Transverse colon (tissue), 4 donors: ENCODE measurements at regions of chr19 and their contacts with region 1.

Region 1: DNA sequence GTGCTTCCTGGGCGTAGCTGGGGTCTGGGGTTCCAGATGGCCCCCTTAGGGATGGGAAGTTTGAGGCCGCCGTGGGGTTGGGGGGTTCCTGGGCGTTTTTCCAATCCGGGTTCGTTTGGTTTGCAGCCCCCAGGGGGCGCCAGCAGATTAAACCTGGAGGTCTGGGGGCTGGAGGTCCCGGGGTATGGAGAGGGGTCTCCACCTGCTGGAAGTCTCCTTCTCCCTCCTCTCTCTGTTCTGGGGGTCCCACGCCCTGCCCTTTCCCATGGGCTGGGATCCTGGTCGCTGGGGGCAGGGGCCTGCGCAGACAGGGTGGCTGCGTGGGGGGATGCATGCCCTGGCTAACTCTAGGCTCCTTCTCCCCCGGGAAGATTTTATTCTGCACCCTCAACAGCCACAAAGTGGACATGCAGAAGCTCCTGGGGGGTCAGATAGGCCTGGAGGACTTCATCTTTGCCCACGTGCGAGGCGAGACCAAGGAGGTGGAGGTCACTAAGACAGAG is 897 bp downstream of the GIPC3 start:
- DNase-seq: no peak
- H3K4me3 ChIP-seq: peak overlapping the region in 3 of 4 donors; percentile 16 to 42 (median 24)
- H3K27ac ChIP-seq: no peak overlapping the region
- H3K4me1 ChIP-seq: peaks cover 3 to 17% (median 8%) of the 10 kb centered on the region in 4 donors
- H3K27me3 ChIP-seq: peaks cover 29% of the 10 kb centered on the region
- CTCF ChIP-seq: peak; percentile 41 to 49 (median 44)
- EP300 ChIP-seq: no peak
- POLR2A ChIP-seq: no peak

Region 2: GRCh38 chr19:3623716-3624115 is 37.5 kb after region 1 on chr19:
- in situ Hi-C with region 1: no loop called
- intact Hi-C with region 1: loop called (anchors 2 kb)
- DNase-seq: no peak
- H3K4me3 ChIP-seq: no peak overlapping the region
- H3K27ac ChIP-seq: no peak overlapping the region
- H3K4me1 ChIP-seq: peaks cover 14 to 25% (median 17%) of the 10 kb centered on the region in 4 donors
- H3K27me3 ChIP-seq: no peaks in the 10 kb centered on the region
- CTCF ChIP-seq: no peak
- EP300 ChIP-seq: no peak
- POLR2A ChIP-seq: no peak